K562 (cell line): ENCODE measurements at regions of chr17 and their contacts with region 1.

Region 1: DNA sequence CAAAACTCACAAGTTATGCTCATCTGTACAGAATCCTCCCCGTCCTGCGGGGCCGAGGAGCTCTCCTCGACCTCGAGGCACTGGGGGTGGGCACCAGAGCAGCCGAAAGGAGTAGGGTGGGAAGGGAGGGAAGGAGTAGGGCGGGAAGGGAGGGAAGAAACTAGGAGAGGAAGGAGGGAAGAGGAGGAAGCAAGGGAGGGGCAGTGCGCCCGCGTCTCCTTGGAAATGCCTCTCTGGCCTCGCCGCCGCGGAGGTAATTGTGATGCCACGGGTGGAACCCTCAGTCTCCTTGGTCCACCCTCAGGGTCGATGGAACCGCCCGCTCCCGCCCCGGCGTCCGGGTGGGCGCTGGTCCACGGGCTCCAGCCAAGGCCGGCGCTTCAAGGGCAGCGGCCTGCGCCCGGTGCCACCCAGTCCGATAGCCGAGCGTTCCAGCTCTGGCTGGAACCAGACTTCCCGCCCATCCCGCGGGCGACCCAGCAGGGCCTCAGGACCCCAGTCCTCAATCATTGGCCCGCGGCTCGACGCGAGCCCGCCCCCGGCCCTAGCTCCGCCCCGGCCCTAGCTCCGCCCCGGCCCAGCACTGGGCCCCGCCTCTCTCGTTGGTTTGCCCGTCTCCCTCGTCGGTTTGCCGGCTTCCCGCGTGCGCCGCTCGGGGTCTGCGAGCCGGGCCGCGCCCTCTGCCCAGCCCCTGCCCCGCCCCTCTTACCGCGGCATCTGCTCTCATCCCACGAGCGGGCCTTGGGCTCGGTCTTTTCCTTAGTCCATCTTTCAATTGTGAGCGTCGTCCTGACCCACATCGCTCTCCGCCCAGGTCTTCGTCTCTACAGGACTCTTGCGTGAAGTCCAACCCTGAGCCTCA is 596 bp downstream of the PROCA1 start:
- DNase-seq: peak; percentile 96 to 98 (median 98)
- ATAC-seq: peak; percentile 93
- H3K4me3 ChIP-seq: peak overlapping the region; percentile 71
- H3K27ac ChIP-seq: peak overlapping the region; percentile 88
- H3K4me1 ChIP-seq: peaks cover 16 to 34% of the 10 kb centered on the region in 2 experiments
- H3K27me3 ChIP-seq: 0 out of 5 replicates have a peak, but pooled peaks cover 0 to 11% of the 10 kb centered on the region in 2 experiments
- CTCF ChIP-seq: no peak
- EP300 ChIP-seq: no peak
- POLR2A ChIP-seq: peak; percentile 92
- RAD21 ChIP-seq: no peak

Region 2: GRCh38 chr17:28675980-28676379 is 35.1 kb before region 1 on chr17:
- CTCF ChIA-PET with region 1: interaction called, 3 read pairs
- POLR2A ChIA-PET with region 1: interaction called, 10 read pairs
- in situ Hi-C with region 1: no loop called
- intact Hi-C with region 1: no loop called
- DNase-seq: peak in 1 of 4 experiments; percentile 25
- ATAC-seq: peak; percentile 75
- H3K4me3 ChIP-seq: no peak overlapping the region
- H3K27ac ChIP-seq: no peak overlapping the region
- H3K4me1 ChIP-seq: no peaks in the 10 kb centered on the region
- H3K27me3 ChIP-seq: no peaks in the 10 kb centered on the region
- CTCF ChIP-seq: peak; percentile 57 to 69 (median 60)
- EP300 ChIP-seq: no peak
- POLR2A ChIP-seq: no peak
- RAD21 ChIP-seq: peak in 1 of 2 experiments; percentile 46; a peak in 2 of 4 replicates

Region 3: DNA sequence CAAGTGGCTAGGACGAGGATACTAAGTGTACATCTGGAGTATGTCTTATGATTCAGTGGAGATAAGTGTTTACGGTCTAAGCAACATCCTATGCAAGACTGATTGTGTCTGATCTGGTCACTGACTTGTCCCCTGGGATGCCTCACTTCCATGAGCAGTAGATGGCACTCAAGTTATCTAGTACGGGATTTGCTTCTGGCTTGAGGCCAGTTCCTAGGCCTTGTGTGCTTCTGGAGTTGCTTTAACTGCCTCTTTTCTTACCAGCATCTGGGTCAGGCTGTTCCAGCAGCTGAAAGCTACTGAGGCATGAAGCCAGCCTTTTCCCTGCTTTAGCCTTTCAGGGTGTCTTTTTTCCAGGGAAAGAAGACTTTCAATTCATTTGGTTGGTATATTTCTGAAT is 26.1 kb before region 1 on chr17:
- CTCF ChIA-PET with region 1: interaction called, 3 read pairs
- POLR2A ChIA-PET with region 1: interaction called, 10 read pairs
- in situ Hi-C with region 1: no loop called
- intact Hi-C with region 1: no loop called
- DNase-seq: peak in 2 of 4 experiments; percentile 44 to 61
- ATAC-seq: peak; percentile 54; the same call in 2 of the 3 replicates
- H3K4me3 ChIP-seq: no peak overlapping the region
- H3K27ac ChIP-seq: no peak overlapping the region
- H3K4me1 ChIP-seq: no peaks in the 10 kb centered on the region
- H3K27me3 ChIP-seq: no peaks in the 10 kb centered on the region
- CTCF ChIP-seq: peak; percentile 15 to 56 (median 35); a peak in 3 of 6 replicates
- EP300 ChIP-seq: no peak
- POLR2A ChIP-seq: no peak
- RAD21 ChIP-seq: peak in 1 of 2 experiments; percentile 58; a peak in 2 of 4 replicates

Region 4: GRCh38 chr17:28693869-28694268 is 17.2 kb before region 1 on chr17:
- CTCF ChIA-PET with region 1: no interaction called
- POLR2A ChIA-PET with region 1: interaction called, 14 read pairs
- in situ Hi-C with region 1: no loop called
- intact Hi-C with region 1: no loop called
- DNase-seq: peak in 1 of 4 experiments; percentile 13
- ATAC-seq: no peak
- H3K4me3 ChIP-seq: no peak overlapping the region
- H3K27ac ChIP-seq: no peak overlapping the region; the same call in 2 of the 3 replicates
- H3K4me1 ChIP-seq: no peaks in the 10 kb centered on the region
- H3K27me3 ChIP-seq: no peaks in the 10 kb centered on the region
- CTCF ChIP-seq: no peak
- EP300 ChIP-seq: no peak
- POLR2A ChIP-seq: no peak
- RAD21 ChIP-seq: no peak